Caco-2 (cell line): ENCODE measurements at regions of chr5 and their contacts with region 1.

Region 1: DNA sequence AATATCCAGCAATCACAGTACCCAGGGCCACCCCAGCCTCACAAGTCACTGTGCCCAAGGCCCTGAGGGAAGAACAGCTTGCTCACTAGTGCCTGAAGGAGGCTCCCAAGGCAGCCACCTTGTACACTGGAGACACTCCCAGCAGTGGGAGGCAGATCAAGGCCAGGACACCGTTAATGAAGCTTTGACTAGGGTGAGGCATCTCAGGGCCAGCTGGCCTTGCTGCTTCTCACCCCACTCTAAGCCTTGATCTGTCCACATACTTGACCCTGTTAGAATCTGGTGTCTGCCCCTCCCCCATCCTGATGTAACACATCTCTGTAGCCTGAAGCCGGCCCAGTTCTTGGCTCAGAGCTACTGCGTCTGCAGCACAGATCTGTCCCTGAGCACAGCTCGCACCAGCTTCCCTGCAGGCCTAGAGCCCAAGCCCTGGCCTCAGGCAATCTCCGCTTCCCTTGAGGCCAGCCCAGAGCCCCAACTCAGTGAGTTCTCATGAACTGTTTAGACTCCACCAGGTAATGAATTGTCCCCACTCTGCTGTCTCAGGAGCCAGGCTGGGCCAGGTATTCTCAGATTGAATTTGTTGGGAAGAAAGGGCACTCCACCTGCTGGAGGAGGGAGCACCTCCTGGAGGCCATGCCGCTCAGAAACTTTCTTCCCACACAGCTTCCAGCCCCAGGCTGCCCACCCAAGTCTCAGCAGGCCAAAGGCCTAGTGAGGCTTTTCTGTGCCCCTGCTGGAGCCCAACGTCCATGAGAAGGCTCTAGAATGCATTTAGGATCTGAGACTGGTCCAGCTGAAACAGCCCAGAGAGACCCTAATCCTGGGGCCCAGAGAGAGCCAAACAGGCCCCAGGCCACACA is 13.5 kb upstream of the JADE2 start:
- DNase-seq: peak; percentile 90 to 93
- H3K4me3 ChIP-seq: no peak overlapping the region
- H3K4me3 Mint-ChIP-seq: peak overlapping the region; percentile 40
- H3K27ac Mint-ChIP-seq: peak overlapping the region; percentile 92
- H3K4me1 ChIP-seq: peaks cover 48% of the 10 kb centered on the region
- H3K4me1 Mint-ChIP-seq: peaks cover 50% of the 10 kb centered on the region
- H3K27me3 ChIP-seq: no peaks in the 10 kb centered on the region
- H3K27me3 Mint-ChIP-seq: no peaks in the 10 kb centered on the region
- CTCF ChIP-seq: peak; percentile 53 to 70

Region 2: GRCh38 chr5:134125039-134126015 is 386.7 kb before region 1 on chr5:
- CTCF ChIA-PET with region 1: no interaction called
- POLR2A ChIA-PET with region 1: no interaction called
- intact Hi-C with region 1: no loop called
- DNase-seq: no peak
- H3K4me3 ChIP-seq: no peak overlapping the region
- H3K4me3 Mint-ChIP-seq: no peak overlapping the region
- H3K27ac Mint-ChIP-seq: no peak overlapping the region
- H3K4me1 ChIP-seq: no peaks in the 10 kb centered on the region
- H3K4me1 Mint-ChIP-seq: no peaks in the 10 kb centered on the region
- H3K27me3 ChIP-seq: no peaks in the 10 kb centered on the region
- H3K27me3 Mint-ChIP-seq: no peaks in the 10 kb centered on the region
- CTCF ChIP-seq: no peak

Region 3: DNA sequence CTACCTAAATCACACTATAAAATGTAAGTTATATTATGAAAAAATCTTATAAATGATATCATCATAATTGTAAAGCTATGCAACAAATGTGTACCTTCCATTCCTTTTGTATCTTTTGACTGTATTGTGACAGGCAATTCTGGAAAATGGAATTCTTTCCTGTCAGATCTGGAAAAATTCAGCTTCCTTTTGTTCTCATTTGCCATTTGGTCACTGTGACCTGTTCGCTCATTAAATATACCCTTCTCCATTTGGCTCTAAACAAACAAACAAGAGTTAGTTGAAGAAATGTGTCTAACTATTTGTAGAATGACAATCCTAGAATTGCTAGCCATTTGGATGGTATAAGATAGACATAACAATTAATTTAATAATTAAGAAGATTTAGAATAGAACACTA is 207.7 kb before region 1 on chr5:
- CTCF ChIA-PET with region 1: no interaction called
- POLR2A ChIA-PET with region 1: no interaction called
- intact Hi-C with region 1: loop called (anchors 2 kb)
- DNase-seq: no peak
- H3K4me3 ChIP-seq: no peak overlapping the region
- H3K4me3 Mint-ChIP-seq: no peak overlapping the region
- H3K27ac Mint-ChIP-seq: no peak overlapping the region
- H3K4me1 ChIP-seq: peaks cover 16% of the 10 kb centered on the region
- H3K4me1 Mint-ChIP-seq: peaks cover 12% of the 10 kb centered on the region
- H3K27me3 ChIP-seq: no peaks in the 10 kb centered on the region
- H3K27me3 Mint-ChIP-seq: no peaks in the 10 kb centered on the region
- CTCF ChIP-seq: no peak

Region 4: GRCh38 chr5:134411546-134412266 is 100.3 kb before region 1 on chr5 and contains the start of gene CDKN2AIPNL:
- CTCF ChIA-PET with region 1: interaction called, 10 read pairs
- POLR2A ChIA-PET with region 1: interaction called, 10 read pairs
- intact Hi-C with region 1: loop called (anchors 1 kb)
- DNase-seq: peak; percentile 91 to 95
- H3K4me3 ChIP-seq: peak within 1 kb of the TSS; percentile 83
- H3K4me3 Mint-ChIP-seq: peak within 1 kb of the TSS; percentile 98
- H3K27ac Mint-ChIP-seq: peak within 1 kb of the TSS; percentile 35
- H3K4me1 ChIP-seq: peaks cover 47% of the 10 kb centered on the region
- H3K4me1 Mint-ChIP-seq: peaks cover 11% of the 10 kb centered on the region
- H3K27me3 ChIP-seq: no peaks in the 10 kb centered on the region
- H3K27me3 Mint-ChIP-seq: no peaks in the 10 kb centered on the region
- CTCF ChIP-seq: peak; percentile 74 to 89
- total RNA-seq, gene CDKN2AIPNL: 49.8 and 53.2 TPM in 2 replicates

Region 5: GRCh38 chr5:134430001-134430569 is 81.9 kb before region 1 on chr5:
- CTCF ChIA-PET with region 1: interaction called, 11 read pairs
- POLR2A ChIA-PET with region 1: no interaction called
- intact Hi-C with region 1: no loop called
- DNase-seq: no peak
- H3K4me3 ChIP-seq: no peak overlapping the region
- H3K4me3 Mint-ChIP-seq: no peak overlapping the region
- H3K27ac Mint-ChIP-seq: no peak overlapping the region
- H3K4me1 ChIP-seq: peaks cover under 1% of the 10 kb centered on the region; the same call in 1 of the 2 replicates
- H3K4me1 Mint-ChIP-seq: peaks cover 19% of the 10 kb centered on the region
- H3K27me3 ChIP-seq: no peaks in the 10 kb centered on the region
- H3K27me3 Mint-ChIP-seq: no peaks in the 10 kb centered on the region
- CTCF ChIP-seq: no peak

Region 6: DNA sequence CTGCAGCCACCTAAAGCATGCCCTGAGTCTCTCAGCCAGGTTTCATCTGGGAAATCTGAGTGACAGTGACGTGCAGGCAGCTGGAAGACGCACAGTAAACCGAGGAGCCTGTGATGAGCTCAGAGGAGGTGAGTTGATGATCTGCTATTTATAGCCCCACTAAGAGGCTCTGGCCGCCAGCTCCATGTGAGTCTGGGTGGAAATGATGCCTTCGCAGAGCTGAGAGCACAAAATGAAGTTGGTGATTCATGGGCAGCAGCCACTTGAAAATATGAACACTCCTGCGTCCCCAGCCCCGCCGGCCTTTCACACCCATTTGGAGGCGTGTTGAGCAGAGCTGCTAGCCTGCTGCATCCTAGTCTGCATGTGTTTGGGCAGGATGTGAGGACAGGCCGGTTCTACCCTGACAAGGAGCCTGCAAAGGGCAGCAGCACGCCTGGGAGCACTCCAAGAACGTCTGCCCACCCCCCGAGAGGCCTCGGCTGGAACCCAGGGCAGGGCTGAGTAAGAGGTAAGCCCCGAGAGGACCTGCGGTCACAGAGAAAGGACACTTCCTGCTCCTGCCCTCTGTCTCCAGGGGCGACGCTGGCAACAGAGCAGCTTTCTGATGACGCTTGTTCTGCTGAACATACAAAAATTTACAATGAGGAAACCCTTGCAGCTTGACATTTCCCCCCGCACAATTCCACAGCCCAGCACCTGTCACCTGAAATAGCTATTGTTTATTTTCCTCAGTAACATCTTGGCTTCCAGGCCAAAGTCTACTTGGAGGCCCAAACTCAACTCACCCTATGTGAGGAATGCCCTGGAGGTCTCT is 75.3 kb before region 1 on chr5:
- CTCF ChIA-PET with region 1: interaction called, 19 read pairs
- POLR2A ChIA-PET with region 1: interaction called, 19 read pairs
- intact Hi-C with region 1: loop called (anchors 1 kb)
- DNase-seq: peak; percentile 84 to 86
- H3K4me3 ChIP-seq: peak overlapping the region; percentile 19
- H3K4me3 Mint-ChIP-seq: peak overlapping the region; percentile 55
- H3K27ac Mint-ChIP-seq: peak overlapping the region; percentile 82
- H3K4me1 ChIP-seq: peaks cover 47% of the 10 kb centered on the region
- H3K4me1 Mint-ChIP-seq: peaks cover 54% of the 10 kb centered on the region
- H3K27me3 ChIP-seq: no peaks in the 10 kb centered on the region
- H3K27me3 Mint-ChIP-seq: no peaks in the 10 kb centered on the region
- CTCF ChIP-seq: no peak

Region 7: DNA sequence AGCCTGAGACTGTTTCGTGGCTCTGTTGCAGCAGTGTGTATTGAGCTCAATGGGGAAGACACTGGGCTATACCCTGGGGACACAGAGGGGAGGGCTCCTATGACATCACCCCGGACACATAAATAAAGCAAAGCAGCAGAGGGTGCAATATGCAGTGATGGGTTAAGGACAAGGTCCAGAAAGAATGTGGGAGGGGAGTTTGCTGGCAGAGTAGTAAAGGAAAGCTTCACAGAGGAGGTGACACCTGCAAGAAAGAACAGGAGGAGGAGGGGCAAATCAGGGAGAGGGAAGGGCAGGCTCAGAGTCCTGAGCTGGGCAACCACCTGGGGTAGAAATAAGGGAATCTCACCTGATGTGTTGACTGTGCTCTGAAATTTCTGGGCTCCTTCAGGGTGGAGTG is 65.1 kb before region 1 on chr5:
- CTCF ChIA-PET with region 1: interaction called, 12 read pairs
- POLR2A ChIA-PET with region 1: interaction called, 7 read pairs
- intact Hi-C with region 1: loop called (anchors 2 kb)
- DNase-seq: peak; percentile 64 to 76
- H3K4me3 ChIP-seq: no peak overlapping the region
- H3K4me3 Mint-ChIP-seq: no peak overlapping the region
- H3K27ac Mint-ChIP-seq: peak overlapping the region; percentile 8
- H3K4me1 ChIP-seq: peaks cover 29% of the 10 kb centered on the region
- H3K4me1 Mint-ChIP-seq: peaks cover 23% of the 10 kb centered on the region
- H3K27me3 ChIP-seq: no peaks in the 10 kb centered on the region
- H3K27me3 Mint-ChIP-seq: no peaks in the 10 kb centered on the region
- CTCF ChIP-seq: no peak

Region 8: DNA sequence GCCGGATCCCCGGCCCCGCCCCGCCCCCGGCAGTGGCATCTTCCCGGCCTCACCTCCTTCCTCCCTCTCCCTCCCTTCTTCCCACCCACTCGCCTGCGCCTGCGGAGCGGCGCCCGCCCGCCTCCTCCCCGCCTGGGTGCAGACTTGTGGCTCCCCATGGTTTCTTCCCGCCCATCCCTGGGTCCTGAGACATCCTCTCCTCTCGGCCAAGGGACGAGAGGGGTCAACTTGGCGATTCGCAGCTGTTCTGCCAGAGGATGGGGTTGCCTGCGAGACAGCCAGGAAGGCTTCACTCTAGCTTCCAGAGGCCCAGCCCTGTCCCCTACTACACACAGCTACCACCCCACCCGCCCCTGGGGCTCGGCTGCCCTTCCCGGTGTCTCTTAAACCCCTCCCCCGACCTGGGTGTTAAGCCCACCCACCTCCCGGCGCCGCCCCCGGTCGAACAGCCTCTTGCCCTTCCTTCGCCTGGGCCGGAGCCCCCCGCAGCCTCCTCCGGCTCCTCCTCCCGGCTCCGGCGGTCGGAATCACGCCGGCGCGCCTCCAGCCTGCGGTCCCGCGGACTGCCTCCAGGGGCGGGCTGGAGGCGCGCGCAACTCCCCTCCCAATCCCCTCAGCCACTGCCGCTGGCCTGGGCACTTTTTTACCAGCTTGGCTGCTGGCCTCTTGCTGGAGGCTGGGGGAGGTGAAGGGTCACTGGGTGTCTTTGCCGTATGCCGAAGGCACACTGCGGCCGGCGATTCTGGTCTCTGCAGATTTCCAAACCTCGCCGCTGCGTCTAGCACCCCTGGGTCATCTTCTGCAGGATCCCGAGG is 15.3 kb after region 1 on chr5:
- CTCF ChIA-PET with region 1: interaction called, 18 read pairs
- POLR2A ChIA-PET with region 1: interaction called, 41 read pairs
- intact Hi-C with region 1: loop called (anchors 1 kb)
- DNase-seq: peak; percentile 89 to 94
- H3K4me3 ChIP-seq: peak overlapping the region; percentile 92
- H3K4me3 Mint-ChIP-seq: peak overlapping the region; percentile 96
- H3K27ac Mint-ChIP-seq: peak overlapping the region; percentile 92
- H3K4me1 ChIP-seq: peaks cover 31% of the 10 kb centered on the region
- H3K4me1 Mint-ChIP-seq: peaks cover 8% of the 10 kb centered on the region
- H3K27me3 ChIP-seq: no peaks in the 10 kb centered on the region
- H3K27me3 Mint-ChIP-seq: no peaks in the 10 kb centered on the region
- CTCF ChIP-seq: peak; percentile 76 to 79

Region 9: GRCh38 chr5:134648425-134649162 is 136.6 kb after region 1 on chr5 and contains the start of gene SEC24A:
- CTCF ChIA-PET with region 1: no interaction called
- POLR2A ChIA-PET with region 1: no interaction called
- intact Hi-C with region 1: no loop called
- DNase-seq: peak; percentile 94 to 95
- H3K4me3 ChIP-seq: peak within 1 kb of the TSS; percentile 85
- H3K4me3 Mint-ChIP-seq: peak within 1 kb of the TSS; percentile 82
- H3K27ac Mint-ChIP-seq: peak within 1 kb of the TSS; percentile 90
- H3K4me1 ChIP-seq: no peaks in the 10 kb centered on the region; the same call in 1 of the 2 replicates
- H3K4me1 Mint-ChIP-seq: no peaks in the 10 kb centered on the region
- H3K27me3 ChIP-seq: no peaks in the 10 kb centered on the region
- H3K27me3 Mint-ChIP-seq: no peaks in the 10 kb centered on the region
- CTCF ChIP-seq: no peak
- total RNA-seq, gene SEC24A: 47.4 and 49.9 TPM in 2 replicates